GM10248 (cell line): ENCODE measurements at regions of chr7 and their contacts with region 1.

Region 1: DNA sequence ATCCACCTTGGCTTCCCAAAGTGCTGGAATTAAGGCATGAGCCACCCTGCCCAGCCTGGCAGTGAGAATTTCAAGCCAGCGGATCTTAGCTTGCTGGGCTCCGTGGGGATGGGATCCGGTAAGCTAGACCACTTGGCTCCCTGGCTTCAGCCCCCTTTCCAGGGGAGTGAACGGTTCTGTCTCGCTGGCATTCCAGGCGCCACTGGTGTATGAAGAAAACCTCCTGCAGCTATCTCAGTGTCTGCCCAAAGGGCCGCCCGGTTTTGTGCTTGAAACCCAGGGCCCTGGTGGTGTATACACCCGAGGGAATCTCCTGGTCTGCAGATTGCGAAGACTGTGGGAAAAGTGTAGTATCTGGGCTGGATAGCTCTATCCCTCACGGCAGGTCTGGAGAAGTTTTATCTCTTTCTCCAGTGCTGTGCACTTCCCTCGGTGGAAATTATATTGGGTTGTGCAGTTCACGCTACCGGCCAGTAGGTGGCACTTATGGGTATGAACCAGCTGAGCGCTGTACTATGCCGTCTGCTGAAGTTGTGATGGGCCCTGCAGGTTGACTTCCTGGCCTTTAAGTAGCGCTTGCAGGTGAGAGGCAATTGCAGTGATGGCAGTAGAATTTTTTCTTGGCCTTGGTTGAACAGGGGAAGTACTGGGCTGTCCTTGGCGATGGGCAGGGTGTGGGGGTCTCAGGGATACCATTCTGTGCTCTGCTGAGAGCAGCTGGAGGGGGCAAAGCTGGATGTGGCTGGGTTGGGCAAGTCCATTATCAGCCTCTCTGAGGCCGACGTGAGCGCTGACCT is 138.0 kb upstream of the MTPN start:
- DNase-seq: peak; percentile 64
- CTCF ChIP-seq: peak; percentile 83

Region 2: GRCh38 chr7:136045181-136045580 is 70.0 kb before region 1 on chr7:
- CTCF ChIA-PET with region 1: no interaction called
- POLR2A ChIA-PET with region 1: no interaction called
- DNase-seq: no peak
- CTCF ChIP-seq: no peak

Region 3: GRCh38 chr7:136104269-136104603 is 10.9 kb before region 1 on chr7:
- CTCF ChIA-PET with region 1: interaction called, 19 read pairs
- POLR2A ChIA-PET with region 1: no interaction called
- DNase-seq: no peak
- CTCF ChIP-seq: no peak

Region 4: DNA sequence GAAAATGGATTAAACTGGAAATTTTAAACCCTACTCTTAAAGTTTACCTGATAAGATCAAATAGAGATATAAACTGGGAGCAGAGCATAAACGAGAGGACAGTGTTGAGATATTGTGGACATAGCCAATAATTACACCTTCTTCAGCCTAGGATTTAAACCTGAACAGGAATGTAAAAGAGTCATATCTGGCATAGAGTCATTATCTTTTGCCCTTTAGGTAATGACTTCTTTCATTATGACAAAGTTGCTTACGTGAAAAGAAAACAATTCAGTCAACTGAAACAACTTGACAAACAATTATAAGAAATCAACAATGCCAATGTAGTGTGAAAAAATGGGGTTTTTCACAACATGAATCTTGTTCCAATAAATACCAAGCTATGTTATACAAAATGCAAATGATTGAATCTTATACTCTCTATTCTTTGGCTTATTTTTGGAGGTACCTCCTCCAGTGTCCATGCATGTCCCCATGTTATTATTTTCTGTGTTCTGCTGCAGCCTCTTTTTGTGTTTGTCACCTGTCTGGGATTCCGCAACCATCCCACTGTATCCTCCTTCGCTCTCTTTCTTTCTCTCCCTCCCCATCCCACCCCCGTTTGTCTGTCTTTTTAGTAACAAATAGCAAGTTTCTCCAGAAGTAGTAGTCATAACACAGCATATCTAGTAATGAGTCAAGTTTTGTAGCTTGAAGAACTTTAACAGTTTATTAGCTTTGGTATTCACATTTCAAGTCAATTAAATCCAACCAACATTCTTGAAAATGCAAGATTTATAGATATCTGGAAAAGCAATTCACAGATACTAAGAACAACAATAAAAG is 15.9 kb after region 1 on chr7:
- CTCF ChIA-PET with region 1: interaction called, 38 read pairs
- POLR2A ChIA-PET with region 1: no interaction called
- DNase-seq: no peak
- CTCF ChIP-seq: no peak

Region 5: GRCh38 chr7:136139417-136139816 is 24.3 kb after region 1 on chr7:
- CTCF ChIA-PET with region 1: interaction called, 17 read pairs
- POLR2A ChIA-PET with region 1: no interaction called
- DNase-seq: no peak
- CTCF ChIP-seq: no peak